AG04449 (cell line): ENCODE measurements at regions of chr1 and their contacts with region 1.

Region 1: DNA sequence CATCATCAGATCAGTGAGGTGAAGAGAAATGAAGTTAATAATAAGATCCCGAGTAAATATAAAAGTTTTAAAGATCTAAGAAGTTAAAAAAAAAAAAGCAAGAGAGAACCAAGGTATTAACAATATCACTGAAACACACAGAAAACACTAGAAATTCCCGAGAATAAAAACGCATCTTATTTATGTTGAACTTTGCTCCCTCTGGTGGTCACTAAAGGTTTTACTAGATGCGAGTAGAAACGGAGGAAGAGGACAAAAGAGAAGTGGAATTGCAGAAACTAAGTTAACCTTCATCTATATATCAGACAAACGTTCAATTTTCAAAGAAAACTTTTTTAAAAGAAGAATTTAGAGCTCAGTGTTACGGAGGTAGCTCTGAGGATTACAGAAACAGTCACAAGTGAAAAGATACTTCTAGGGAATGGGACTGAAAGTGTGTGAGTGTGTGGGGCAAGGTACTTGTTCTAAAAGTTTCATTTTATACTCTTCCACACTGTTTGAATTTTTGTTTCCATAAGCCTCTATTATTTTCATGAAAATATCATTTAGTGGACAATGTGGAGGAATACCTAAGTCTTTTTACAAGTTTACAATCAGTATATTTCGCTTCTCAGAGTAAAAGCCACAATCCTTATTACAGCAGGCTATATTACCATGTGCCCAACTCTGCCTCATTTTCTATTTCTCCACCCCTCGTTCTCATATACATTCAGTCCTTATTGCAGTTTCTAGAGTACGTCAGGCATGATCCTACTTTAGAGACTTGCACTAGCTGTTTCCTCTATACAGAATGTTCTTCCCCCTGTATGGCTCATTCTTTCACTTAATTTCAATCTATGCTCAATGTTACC is 19.7 kb downstream of the ACBD6 start:
- DNase-seq: no peak
- H3K4me3 ChIP-seq: no peak overlapping the region
- CTCF ChIP-seq: peak; percentile 49

Region 2: GRCh38 chr1:180178511-180179161 is 304.0 kb before region 1 on chr1:
- CTCF ChIA-PET with region 1: interaction called, 23 read pairs
- POLR2A ChIA-PET with region 1: no interaction called
- DNase-seq: no peak
- H3K4me3 ChIP-seq: no peak overlapping the region
- CTCF ChIP-seq: peak; percentile 94

Region 3: GRCh38 chr1:180198196-180198595 is 284.5 kb before region 1 on chr1:
- CTCF ChIA-PET with region 1: interaction called, 11 read pairs
- POLR2A ChIA-PET with region 1: no interaction called
- DNase-seq: no peak
- H3K4me3 ChIP-seq: no peak overlapping the region
- CTCF ChIP-seq: no peak

Region 4: DNA sequence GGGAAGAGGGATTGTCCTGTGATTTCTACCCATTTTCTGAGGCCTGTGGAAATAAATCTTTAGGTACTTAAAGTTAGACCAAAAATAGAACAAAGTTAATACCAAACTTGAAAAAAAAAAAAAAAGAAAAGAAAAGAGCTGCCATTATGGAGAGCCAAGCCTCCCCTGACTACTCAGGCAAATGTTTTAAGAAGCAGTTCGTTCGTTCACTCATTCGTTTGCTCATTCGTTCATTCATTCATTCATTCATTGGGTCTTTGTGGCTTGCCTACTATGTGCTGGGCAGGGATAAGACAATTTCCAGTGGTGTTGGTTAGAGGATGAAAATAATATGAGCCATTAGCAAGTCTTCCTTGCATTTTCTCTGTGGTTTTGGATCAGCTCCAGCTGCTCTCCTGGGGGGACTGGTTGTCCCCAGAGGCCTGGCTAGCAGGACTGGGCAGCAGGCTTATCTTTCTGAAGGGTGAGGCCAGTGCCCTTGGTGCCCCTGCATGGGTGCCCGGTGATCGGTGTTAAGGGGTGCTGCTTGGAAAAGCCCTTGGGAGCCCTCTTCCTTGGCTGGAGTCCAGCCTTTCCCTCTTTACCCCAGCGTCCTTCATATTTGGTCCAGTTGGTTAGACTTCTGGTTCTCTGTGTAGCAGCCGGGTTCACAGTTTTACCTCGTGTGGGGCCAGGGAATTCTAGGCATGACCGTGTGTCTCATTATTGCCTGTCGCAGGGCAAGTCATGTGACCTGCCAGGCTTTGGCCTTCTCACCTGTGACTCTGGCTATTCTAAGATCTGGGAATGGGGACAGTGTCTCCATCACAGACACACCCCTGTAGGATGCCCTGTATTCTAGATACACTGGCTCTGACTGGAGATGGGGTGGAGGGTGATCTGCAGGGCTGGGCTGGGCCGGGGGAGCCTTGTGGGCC is 219.8 kb before region 1 on chr1:
- CTCF ChIA-PET with region 1: interaction called, 120 read pairs
- POLR2A ChIA-PET with region 1: no interaction called
- DNase-seq: no peak
- H3K4me3 ChIP-seq: no peak overlapping the region
- CTCF ChIP-seq: no peak

Region 5: DNA sequence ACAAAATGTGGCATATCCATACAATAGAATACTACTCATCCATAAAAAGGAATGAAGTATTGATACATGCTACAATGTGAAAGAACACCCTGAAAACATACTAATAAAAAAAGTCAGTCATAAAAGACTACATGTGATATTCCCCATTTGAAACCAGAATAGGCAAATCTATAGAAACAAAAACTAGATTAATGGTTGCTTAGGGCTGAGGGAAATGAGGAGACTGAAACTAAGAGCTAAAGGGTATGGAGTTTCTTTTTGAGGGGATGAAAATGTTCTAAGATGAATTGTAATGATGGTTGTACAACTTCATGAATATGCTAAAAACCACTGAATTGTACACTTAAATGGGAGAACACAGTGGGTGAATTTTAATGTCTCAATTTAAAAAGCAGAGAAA is 31.1 kb before region 1 on chr1:
- CTCF ChIA-PET with region 1: interaction called, 10 read pairs
- POLR2A ChIA-PET with region 1: no interaction called
- DNase-seq: no peak
- H3K4me3 ChIP-seq: no peak overlapping the region
- CTCF ChIP-seq: no peak

Region 6: GRCh38 chr1:180468311-180468710 is 14.3 kb before region 1 on chr1:
- CTCF ChIA-PET with region 1: interaction called, 120 read pairs
- POLR2A ChIA-PET with region 1: no interaction called
- DNase-seq: no peak
- H3K4me3 ChIP-seq: no peak overlapping the region
- CTCF ChIP-seq: no peak

Region 7: GRCh38 chr1:180502360-180503273 is 20.0 kb after region 1 on chr1 and contains the start of gene ACBD6:
- CTCF ChIA-PET with region 1: interaction called, 40 read pairs
- POLR2A ChIA-PET with region 1: no interaction called
- DNase-seq: no peak
- H3K4me3 ChIP-seq: peak within 1 kb of the TSS; percentile 91
- CTCF ChIP-seq: peak; percentile 14